HepG2 (cell line): ENCODE measurements at regions of chr20 and their contacts with region 1.

Region 1: DNA sequence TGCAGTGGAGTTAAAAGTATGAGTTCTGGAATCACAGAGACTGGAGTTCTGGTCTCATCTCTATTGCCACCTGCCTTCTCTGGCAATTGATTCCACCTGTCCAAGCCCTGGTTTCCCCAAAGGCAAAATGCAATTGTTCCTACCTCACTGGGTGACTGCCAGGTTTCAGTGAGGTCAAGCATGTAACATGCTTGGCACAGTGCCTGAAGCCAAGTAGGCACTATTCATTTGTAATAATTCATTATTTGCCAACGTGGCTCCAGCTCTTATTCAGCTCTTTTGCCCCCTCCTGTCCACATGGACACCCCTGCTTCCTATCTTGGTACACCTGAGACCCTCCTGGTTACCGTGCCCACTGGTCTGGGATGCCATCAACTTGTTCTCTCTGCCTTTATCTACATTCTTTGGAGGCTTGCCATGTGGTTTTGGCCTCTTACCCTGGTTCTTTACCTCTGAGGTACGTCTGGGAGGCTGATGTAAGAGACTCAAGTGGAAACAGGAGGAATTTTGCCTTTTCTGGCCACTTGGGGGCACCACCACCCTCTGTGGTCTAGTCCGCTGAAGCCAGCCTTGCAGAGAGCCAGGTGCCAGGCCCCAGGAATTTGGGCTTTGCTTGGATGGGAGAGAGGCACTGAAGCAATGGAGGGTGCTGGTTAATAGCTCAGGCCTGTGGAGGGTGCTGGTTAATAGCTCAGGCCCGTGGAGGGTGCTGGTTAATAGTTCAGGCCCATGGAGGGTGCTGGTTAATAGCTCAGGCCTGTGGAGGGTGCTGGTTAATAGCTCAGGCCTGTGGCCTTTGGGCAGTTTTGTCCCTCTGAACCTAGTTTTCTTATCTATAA is 1.7 kb downstream of the KCNK15 start:
- DNase-seq: peak; percentile 64
- ATAC-seq: peak; percentile 67
- H3K4me3 ChIP-seq: no peak overlapping the region
- H3K27ac ChIP-seq: no peak overlapping the region
- H3K4me1 ChIP-seq: peaks cover 26% of the 10 kb centered on the region
- H3K27me3 ChIP-seq: peaks cover 33 to 91% of the 10 kb centered on the region in 2 experiments
- CTCF ChIP-seq: peak; percentile 91
- EP300 ChIP-seq: no peak
- POLR2A ChIP-seq: no peak
- RAD21 ChIP-seq: peak; percentile 62; the same call in 1 of the 2 replicates

Region 2: DNA sequence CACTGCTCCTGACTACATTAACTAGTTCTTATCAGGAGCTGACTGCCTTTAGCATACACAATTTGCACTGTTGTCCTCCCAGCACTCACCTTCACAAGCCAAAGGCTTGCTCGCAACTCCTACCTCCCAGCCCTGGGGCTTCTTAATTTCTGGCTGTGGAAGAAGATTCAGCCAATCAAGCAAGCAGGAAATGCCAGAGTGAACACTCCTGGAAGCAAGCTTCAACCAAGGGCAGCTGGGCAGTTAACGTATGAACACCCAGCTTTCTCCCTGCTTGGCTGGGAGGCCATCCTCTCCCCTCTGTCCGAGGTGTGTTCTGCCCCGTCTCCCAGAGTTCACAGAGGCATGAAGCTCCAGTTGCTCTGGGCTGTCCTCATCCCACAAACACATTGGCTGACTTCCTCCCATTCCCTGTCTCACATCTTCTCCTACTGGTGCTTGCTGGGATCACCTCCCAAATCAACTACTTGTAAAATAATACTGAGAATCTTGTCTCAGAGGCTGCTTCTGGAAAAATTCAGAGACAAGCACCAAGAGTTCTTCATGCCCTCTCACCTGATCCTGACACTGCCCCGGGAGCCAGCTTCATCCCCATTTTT is 1305.0 kb before region 1 on chr20:
- CTCF ChIA-PET with region 1: no interaction called
- POLR2A ChIA-PET with region 1: no interaction called
- in situ Hi-C with region 1: no loop called
- intact Hi-C with region 1: loop called (anchors 5 kb)
- DNase-seq: peak; percentile 42
- ATAC-seq: peak; percentile 87
- H3K4me3 ChIP-seq: no peak overlapping the region
- H3K27ac ChIP-seq: no peak overlapping the region
- H3K4me1 ChIP-seq: peaks cover 24% of the 10 kb centered on the region
- H3K27me3 ChIP-seq: peaks cover 0 to 29% of the 10 kb centered on the region in 2 experiments; a peak in 2 of 5 replicates
- CTCF ChIP-seq: peak; percentile 50
- EP300 ChIP-seq: no peak
- POLR2A ChIP-seq: no peak
- RAD21 ChIP-seq: no peak